BJ (cell line): ENCODE measurements at regions of chr1 and their contacts with region 1.

Region 1: DNA sequence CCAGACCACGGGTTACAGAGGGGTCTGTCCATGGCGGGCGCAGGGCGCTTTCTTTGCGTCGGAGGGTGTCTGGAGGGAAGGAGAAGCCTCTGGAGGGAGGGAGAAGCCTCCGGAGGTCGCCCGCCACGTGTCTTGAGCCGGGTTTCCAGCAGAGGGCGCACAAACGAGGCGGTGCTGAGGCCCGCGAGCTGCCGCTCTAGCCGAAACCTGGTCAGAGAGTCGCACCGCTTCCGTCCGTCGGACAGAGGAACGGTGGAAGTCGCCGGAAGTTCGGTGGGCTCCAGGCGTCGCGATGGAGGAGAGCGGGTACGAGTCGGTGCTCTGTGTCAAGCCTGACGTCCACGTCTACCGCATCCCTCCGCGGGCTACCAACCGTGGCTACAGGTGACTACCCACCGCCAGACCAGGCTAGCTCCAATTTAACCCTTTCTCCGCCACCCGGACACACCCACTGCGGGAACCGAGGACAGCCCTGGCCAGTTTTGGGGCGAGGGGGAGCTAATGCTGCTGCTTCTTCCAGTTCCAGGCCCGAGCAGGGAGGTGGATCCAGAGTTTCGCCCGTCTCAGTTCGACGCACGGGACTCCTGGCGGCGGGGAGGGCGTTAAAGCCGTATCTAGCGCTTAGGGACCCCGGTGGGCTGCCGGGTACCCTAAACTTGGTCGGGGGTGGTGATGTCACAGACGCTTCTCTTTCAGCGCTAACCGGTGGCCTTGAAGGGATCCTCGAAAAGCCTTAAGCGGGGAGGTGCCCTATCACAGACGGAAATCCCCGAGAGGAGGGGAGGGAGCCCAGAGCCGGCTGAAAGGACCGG is at the start of gene NECAP2:
- DNase-seq: peak; percentile 52
- H3K4me3 ChIP-seq: peak within 1 kb of the TSS; percentile 93
- H3K27me3 ChIP-seq: no peaks in the 10 kb centered on the region
- CTCF ChIP-seq: peak; percentile 92
- polyA plus RNA-seq, gene NECAP2: 102 and 111 TPM in 2 replicates

Region 2: DNA sequence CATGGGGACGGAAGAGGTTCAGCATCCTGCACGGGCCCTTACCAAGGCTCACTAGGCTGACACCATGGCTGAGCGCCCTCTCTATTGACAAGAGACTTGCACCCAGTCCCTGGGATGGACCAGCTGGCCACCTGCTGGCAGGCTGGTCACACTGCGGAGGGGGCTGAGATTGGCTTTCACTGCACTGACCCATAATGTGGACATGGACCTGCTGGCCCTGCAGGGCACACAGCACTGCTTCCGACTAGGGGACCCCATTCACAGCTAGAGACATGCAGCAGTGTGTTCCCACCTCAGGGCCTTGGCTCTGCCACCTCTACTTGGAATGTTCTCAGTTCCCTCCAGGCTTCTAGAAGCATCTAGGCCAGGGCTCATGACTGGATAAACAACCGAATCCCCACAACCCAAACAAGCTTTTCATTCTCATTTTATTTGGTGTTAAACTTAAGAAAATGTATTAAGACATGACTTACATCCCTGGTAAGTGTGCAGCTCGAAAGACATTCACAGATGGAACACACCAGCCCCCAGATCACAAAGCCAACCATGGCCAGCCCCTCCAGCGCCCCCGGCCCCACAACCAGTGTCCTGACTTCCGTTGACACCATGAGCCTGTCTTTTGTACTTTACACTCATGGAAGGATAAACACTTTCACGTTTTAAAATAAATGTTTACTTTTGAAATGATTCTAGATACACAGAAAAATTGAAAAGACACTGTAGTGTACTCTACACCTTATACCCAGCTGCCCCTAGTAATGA is 445.9 kb before region 1 on chr1:
- CTCF ChIA-PET with region 1: no interaction called
- POLR2A ChIA-PET with region 1: no interaction called
- DNase-seq: no peak
- H3K4me3 ChIP-seq: no peak overlapping the region
- H3K27me3 ChIP-seq: peaks cover 3% of the 10 kb centered on the region
- CTCF ChIP-seq: peak; percentile 99

Region 3: GRCh38 chr1:16386454-16387113 is 54.1 kb before region 1 on chr1:
- CTCF ChIA-PET with region 1: interaction called, 12 read pairs
- POLR2A ChIA-PET with region 1: no interaction called
- DNase-seq: no peak
- H3K4me3 ChIP-seq: no peak overlapping the region
- H3K27me3 ChIP-seq: no peaks in the 10 kb centered on the region
- CTCF ChIP-seq: no peak

Region 4: GRCh38 chr1:16421201-16421600 is 19.5 kb before region 1 on chr1:
- CTCF ChIA-PET with region 1: interaction called, 26 read pairs
- POLR2A ChIA-PET with region 1: no interaction called
- DNase-seq: no peak
- H3K4me3 ChIP-seq: no peak overlapping the region
- H3K27me3 ChIP-seq: no peaks in the 10 kb centered on the region; the same call in 1 of the 2 replicates
- CTCF ChIP-seq: no peak

Region 5: DNA sequence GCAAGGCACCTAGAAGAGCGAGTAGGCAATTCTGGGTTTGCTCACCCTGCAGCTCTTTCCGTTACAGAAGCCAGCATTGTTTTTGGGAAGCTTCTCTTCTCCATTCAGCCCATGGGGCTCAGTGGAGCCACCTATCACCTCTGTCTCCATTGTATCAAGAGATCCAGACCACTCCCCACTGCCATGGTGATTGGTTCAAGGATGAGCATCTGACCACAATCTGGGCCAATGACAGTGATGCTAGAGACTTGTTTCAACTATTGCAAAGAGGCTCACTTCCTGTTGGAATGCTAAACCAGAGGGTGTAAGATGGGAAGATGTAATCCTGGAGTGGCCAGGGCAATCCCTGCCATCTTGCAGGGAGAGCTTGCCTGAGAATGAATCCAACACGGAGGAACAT is 10.1 kb before region 1 on chr1:
- CTCF ChIA-PET with region 1: interaction called, 26 read pairs
- POLR2A ChIA-PET with region 1: no interaction called
- DNase-seq: no peak
- H3K4me3 ChIP-seq: no peak overlapping the region
- H3K27me3 ChIP-seq: peaks cover 2% of the 10 kb centered on the region
- CTCF ChIP-seq: no peak

Region 6: GRCh38 chr1:16451841-16452528 is 11.3 kb after region 1 on chr1:
- CTCF ChIA-PET with region 1: interaction called, 28 read pairs
- POLR2A ChIA-PET with region 1: interaction called, 3 read pairs
- DNase-seq: no peak
- H3K4me3 ChIP-seq: no peak overlapping the region
- H3K27me3 ChIP-seq: no peaks in the 10 kb centered on the region
- CTCF ChIP-seq: no peak

Region 7: DNA sequence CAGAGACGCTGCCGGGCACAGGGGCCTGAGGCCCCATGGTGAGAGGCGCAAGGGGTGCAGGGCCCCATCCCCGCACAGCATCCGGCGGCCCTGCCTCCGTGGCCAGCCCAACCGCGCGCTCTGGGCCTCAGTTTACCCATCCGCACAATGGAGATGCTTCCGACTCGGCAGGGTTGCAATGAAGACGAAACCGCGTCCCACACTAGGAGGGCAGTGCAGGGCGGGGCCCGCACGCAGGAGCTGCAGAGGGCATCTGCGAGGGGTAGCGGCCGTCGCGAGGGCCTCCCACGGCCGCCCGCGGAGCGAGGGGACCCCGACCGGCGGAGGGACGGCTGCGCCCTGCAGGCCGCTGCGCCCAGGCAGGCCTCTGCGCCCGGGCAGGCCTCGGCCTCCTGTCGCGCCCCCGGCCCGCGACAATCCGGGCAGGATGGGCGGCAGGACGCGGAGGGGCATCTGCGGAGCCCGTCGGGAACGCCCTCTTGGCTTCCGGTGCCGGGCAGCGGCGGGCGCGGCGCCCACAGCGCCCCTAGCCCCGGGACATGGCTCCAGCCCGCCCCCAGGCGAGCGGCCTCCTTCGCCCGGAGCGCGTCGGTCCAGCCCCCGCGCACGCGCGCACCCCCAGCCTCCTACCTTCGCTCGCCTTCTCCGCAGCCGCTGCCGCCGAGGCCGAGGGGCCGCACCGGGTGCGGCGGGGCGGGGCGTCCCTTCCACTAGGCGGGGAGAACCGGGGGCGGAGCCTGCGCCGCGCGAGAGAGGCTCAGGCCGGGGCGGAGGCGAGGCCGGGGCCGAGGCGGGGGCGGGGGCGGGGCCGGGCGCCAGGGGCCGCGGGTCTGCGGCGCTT is 58.1 kb after region 1 on chr1:
- CTCF ChIA-PET with region 1: no interaction called
- POLR2A ChIA-PET with region 1: no interaction called
- DNase-seq: no peak
- H3K4me3 ChIP-seq: peak overlapping the region; percentile 84
- H3K27me3 ChIP-seq: no peaks in the 10 kb centered on the region
- CTCF ChIP-seq: no peak